ENCODE measurements at regions of chr7 and their contacts with region 1.

Region 1: DNA sequence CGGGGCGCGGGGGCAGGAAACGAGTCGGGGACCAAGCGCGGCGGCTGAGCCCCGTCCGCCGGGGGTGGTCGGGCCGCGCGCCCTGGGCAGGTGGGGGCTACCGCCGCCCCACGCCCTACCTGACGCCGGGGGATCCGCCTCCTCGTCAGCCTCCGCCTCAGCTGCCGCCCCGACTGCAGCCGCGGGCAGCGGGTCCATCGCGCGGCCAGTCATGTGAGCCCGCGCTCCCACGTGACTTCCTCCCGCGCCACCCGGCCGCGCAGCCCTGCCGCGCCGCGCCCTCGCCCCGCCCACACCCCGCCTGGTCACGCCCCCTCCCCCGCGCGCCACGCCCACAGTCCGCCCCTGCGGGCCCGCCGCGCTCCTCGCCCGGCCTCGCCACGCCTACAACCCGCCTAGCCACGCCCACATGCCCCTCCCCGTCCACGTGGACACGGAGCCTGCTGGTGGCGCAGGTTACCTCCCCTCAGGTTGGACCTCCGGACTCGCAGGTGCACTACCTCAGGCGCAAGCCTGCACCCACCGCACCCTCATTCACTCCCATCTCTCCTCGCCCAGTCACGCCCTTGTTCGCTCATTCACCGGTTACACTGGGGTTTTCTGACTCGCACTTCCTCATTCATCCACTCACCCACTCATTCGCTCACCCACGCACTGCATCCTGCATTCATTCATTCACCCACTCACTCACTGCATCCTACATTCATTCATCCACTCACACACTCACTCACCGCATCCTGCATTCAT is at the start of gene SNX8:
- DNase-seq: peak; percentile 87 to 100
- H3K4me3 ChIP-seq: peak within 1 kb of the TSS; percentile 72
- H3K27ac ChIP-seq: no peak within 1 kb of the TSS
- H3K4me1 ChIP-seq: 0 out of 2 replicates have a peak, but pooled peaks cover 4% of the 10 kb centered on the region
- H3K27me3 ChIP-seq: no peaks in the 10 kb centered on the region
- CTCF ChIP-seq: no peak
- total RNA-seq, gene SNX8: 73.9 and 102 TPM in 2 replicates

Region 2: DNA sequence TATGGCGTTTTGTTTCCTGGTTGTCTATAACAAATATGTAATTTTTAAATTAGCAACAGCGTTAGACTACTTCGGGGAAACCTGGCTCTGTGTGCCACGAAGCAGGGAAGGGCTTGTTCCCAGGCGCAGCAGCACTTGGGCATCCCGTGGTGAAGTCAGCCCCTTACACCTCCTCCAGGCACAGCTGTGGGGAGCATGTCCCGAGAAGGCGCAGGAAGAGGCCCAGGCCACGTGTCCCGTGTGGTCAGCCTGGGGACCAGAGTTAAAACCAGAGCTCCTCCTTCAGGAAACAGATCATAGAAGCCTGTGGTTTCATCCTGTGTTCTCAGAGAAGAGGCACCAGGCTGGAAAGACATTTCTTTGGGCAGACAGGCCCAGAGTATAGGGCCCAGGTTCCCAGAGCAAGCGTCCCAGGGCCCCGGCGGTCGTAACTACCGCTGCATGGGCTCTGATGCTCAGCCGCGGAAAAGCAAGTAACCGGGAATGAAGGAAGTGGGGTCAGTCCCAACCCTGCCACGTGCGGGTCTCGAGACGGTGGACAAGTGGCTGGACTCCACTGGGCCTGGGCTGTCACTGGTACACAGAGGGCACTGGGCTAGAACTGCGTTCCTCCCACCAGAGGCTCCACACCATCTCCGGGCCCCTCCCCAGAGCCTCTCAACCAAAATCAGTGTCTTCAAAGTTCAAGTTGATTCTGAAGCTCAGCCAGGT is 65.2 kb before region 1 on chr7:
- CTCF ChIA-PET with region 1: no interaction called
- POLR2A ChIA-PET with region 1: interaction called, 6 read pairs
- intact Hi-C with region 1: loop called (anchors 2 kb)
- DNase-seq: peak; percentile 88 to 95
- H3K4me3 ChIP-seq: peak overlapping the region; percentile 5; the same call in 1 of the 2 replicates
- H3K27ac ChIP-seq: peak overlapping the region; percentile 83
- H3K4me1 ChIP-seq: peaks cover 40% of the 10 kb centered on the region
- H3K27me3 ChIP-seq: no peaks in the 10 kb centered on the region
- CTCF ChIP-seq: no peak

Region 3: GRCh38 chr7:2540641-2541051 is 226.3 kb after region 1 on chr7:
- CTCF ChIA-PET with region 1: no interaction called
- POLR2A ChIA-PET with region 1: no interaction called
- intact Hi-C with region 1: no loop called
- DNase-seq: no peak
- H3K4me3 ChIP-seq: no peak overlapping the region
- H3K27ac ChIP-seq: no peak overlapping the region
- H3K4me1 ChIP-seq: no peaks in the 10 kb centered on the region
- H3K27me3 ChIP-seq: no peaks in the 10 kb centered on the region
- CTCF ChIP-seq: no peak